ENCODE measurements at regions of chr3 and their contacts with region 1.

Region 1: GRCh38 chr3:14921078-14921616 is 26.2 kb upstream of the NR2C2 start:
- DNase-seq: peak; percentile 89
- ATAC-seq: peak; percentile 95
- H3K4me3 Mint-ChIP-seq: no peak overlapping the region
- H3K27ac Mint-ChIP-seq: no peak overlapping the region
- H3K4me1 Mint-ChIP-seq: no peaks in the 10 kb centered on the region
- H3K27me3 Mint-ChIP-seq: no peaks in the 10 kb centered on the region

Region 2: DNA sequence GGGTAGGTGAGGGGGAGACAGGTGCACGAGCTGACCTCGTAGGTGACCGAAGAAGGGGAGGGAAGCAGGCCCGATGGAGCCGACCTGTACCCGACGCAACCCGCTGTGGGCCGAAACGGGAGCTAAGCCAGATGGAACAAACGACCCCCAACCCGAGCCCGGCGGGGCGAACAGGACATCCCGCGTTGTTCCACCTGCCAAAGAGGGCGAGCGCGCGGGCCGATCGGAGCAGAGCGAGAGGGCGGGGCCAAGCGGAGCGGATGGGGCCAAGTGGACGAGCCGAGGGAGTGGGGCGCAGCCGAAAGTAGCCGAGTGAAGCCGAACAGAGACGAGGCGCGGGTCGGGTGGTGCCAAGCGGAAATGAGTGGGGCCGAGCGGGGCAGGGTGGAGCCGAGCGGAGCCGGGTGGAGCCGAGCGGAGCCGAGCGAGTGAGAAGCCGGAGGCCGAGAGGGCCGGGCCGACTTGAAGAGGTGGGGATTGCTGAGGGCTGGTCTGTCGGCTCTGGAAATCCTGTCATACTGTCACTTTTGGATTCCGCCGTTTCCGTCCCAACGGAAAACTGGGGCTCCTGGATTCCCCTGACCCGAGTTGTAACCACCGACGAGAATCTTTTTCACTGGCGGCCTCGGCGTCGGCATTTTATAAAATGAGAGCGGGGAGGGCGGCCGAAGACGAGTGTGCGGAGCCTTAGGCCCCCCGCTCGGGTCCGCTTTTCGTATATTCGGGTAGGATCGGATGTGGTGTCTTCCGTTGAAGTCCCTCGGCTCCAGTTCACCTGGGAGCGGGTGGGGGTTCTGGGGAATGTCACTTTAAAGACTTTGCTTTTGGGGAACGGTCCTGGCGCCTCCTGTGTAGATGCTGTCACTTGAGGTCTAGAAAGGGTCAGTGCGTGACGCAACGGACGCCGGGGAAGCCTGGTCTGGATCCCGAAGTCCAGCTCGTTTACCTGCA is 1025.7 kb before region 1 on chr3:
- CTCF ChIA-PET with region 1: no interaction called
- POLR2A ChIA-PET with region 1: no interaction called
- intact Hi-C with region 1: loop called in 1 of 2 experiments (anchors 1 kb)
- DNase-seq: peak; percentile 99
- ATAC-seq: peak; percentile 100
- H3K4me3 Mint-ChIP-seq: peak overlapping the region; percentile 83
- H3K27ac Mint-ChIP-seq: peak overlapping the region; percentile 82
- H3K4me1 Mint-ChIP-seq: peaks cover 19% of the 10 kb centered on the region
- H3K27me3 Mint-ChIP-seq: no peaks in the 10 kb centered on the region

Region 3: DNA sequence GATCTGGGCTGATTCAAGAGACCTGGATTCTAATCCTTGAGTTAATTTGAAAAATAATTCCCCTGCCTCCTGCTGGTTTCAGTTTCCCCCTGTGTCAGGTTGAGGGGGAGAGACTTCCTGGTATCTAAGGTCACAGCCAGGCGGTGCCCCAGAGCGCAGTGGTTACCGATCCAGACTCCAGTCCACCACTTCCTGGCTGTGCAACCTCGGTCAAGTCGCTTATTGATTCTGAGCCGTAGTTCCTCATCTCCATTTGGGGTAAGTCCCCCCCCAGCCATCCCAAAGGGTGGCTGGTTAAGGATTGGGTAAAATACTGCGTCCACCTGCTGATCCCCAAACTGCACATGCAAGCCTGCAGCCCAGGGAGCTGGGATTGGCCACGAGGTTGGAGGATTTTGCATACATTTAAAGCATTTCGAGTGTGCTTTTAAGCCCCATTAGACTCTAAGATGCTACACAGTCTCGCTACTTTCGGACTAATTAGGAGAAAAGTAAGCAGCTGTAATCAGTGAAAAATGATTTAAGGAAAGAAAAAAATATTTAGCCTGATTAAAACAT is 495.0 kb before region 1 on chr3:
- CTCF ChIA-PET with region 1: no interaction called
- POLR2A ChIA-PET with region 1: no interaction called
- intact Hi-C with region 1: no loop called
- DNase-seq: peak; percentile 66
- ATAC-seq: peak; percentile 45
- H3K4me3 Mint-ChIP-seq: peak overlapping the region; percentile 0
- H3K27ac Mint-ChIP-seq: peak overlapping the region; percentile 79
- H3K4me1 Mint-ChIP-seq: peaks cover 91% of the 10 kb centered on the region
- H3K27me3 Mint-ChIP-seq: no peaks in the 10 kb centered on the region

Region 4: DNA sequence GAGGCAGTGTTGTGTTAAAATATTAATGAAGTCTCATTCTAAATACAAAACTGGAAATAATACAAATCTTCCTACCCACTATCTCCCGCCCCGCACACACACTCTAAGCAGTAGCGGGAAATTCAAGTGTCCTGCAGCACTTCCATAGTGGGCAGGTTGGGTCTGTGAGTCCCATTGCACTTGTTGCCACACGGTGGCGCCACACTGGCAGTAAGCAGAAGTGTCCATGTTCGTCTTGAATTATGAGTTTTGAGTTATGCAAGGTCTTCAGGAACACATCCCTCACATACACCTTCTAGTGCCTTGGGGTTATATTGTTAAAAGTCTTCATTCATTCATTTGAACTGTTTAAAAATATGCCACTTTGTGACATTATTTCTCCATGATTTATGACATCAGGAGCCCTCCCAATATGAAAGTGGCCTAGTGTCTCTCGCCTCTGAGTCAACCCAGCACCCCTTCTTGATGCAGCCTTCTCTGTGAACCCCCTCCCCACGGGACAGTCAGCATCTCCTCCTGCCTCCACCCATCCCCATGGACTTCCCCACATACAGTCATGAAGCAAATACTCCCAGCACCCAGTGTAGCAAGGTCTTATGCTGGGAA is 287.2 kb before region 1 on chr3:
- CTCF ChIA-PET with region 1: interaction called, 14 read pairs
- POLR2A ChIA-PET with region 1: no interaction called
- intact Hi-C with region 1: loop called (anchors 1 kb)
- DNase-seq: peak; percentile 78
- ATAC-seq: peak; percentile 76
- H3K4me3 Mint-ChIP-seq: no peak overlapping the region
- H3K27ac Mint-ChIP-seq: no peak overlapping the region
- H3K4me1 Mint-ChIP-seq: no peaks in the 10 kb centered on the region
- H3K27me3 Mint-ChIP-seq: peaks cover 23% of the 10 kb centered on the region

Region 5: DNA sequence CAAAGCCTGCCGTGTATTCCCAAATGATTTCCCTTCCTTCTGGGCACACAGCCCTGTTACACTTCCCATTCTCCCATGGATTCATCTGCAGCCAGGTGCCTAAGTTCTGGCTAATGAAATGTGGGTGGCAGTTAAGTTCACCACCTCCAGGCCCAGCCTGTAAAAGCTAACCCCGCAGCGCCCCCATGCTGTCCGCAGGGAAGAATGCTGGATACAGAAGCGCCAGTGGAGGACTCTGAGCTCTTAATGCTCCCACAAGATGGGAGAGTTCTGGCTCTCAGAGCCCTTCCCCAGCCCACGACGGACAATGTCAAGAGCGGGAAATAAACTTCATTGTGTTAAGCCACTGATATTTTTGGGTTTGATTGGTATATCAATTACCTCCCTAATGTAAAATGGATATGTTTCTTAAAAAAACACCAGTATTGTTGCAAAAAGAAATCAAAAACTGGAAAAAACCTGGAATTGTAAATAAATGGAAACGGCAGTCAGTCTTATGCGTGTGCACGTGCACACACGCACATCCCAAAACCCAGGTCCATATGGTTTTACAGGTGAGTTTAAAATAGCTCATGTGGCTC is 140.1 kb before region 1 on chr3:
- CTCF ChIA-PET with region 1: interaction called, 14 read pairs
- POLR2A ChIA-PET with region 1: no interaction called
- intact Hi-C with region 1: no loop called
- DNase-seq: peak; percentile 70
- ATAC-seq: peak; percentile 79
- H3K4me3 Mint-ChIP-seq: no peak overlapping the region
- H3K27ac Mint-ChIP-seq: no peak overlapping the region
- H3K4me1 Mint-ChIP-seq: no peaks in the 10 kb centered on the region
- H3K27me3 Mint-ChIP-seq: peaks cover 1% of the 10 kb centered on the region

Region 6: DNA sequence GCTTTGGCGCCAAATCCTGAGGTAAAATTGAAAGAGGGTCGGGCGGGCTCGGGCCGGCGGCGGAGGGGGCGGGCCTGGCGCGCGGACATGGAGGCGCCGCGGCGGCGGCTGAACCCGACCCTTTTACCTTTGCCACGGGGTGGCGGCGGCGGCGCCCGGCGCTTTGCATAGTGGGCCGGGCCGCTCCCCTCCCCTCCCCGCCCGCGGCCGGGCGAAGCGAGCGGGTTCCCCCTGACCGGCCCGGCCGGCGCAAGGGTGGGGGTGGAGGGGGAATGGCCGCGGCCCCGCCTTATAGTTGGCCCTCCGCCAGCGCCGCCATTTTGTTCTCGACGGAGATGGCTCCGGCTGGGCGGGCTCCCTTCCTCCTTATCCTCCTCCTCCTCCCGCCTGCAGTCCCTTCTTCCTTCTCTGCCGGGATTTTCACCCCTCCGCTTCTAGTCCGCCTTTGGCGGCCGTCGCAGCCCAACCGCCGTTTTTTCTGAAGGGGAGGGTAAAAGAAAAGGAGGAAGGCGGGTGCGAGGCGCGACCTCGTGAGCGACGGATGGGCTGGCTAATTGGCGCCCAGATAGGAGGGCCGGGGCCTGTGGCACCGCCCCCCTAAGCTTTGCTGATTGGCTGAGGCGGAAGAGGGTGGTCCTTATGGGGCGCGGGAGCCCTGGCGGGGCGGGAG is 26.9 kb after region 1 on chr3:
- CTCF ChIA-PET with region 1: interaction called, 11 read pairs
- POLR2A ChIA-PET with region 1: no interaction called
- intact Hi-C with region 1: no loop called
- DNase-seq: peak; percentile 97
- ATAC-seq: peak; percentile 97
- H3K4me3 Mint-ChIP-seq: peak overlapping the region; percentile 91
- H3K27ac Mint-ChIP-seq: peak overlapping the region; percentile 98
- H3K4me1 Mint-ChIP-seq: peaks cover 49% of the 10 kb centered on the region
- H3K27me3 Mint-ChIP-seq: no peaks in the 10 kb centered on the region

Region 7: DNA sequence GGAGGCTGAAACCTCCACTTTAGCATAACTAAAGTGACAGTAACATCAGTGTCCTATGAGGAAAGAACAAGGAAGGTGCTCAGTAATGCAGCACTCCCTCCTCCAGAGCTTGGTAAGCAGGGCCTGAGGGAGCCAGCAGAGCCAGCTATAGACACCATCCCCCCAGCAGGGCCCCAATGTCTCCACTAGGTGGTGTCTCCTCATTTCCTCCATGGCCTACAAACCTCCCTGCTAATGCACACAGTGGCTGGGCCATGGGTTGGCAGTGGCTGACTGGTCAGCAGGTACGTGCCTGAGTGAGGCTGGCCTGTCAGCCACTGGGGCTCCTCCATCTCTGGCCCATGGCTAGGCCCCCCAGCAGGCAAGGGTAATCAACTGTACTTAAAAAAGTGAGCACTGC is 130.4 kb after region 1 on chr3:
- CTCF ChIA-PET with region 1: interaction called, 5 read pairs
- POLR2A ChIA-PET with region 1: no interaction called
- intact Hi-C with region 1: loop called (anchors 5 kb)
- DNase-seq: peak; percentile 67
- ATAC-seq: peak; percentile 81
- H3K4me3 Mint-ChIP-seq: no peak overlapping the region
- H3K27ac Mint-ChIP-seq: peak overlapping the region; percentile 9
- H3K4me1 Mint-ChIP-seq: peaks cover 30% of the 10 kb centered on the region
- H3K27me3 Mint-ChIP-seq: no peaks in the 10 kb centered on the region

Region 8: GRCh38 chr3:15159501-15160136 is 238.5 kb after region 1 on chr3:
- CTCF ChIA-PET with region 1: no interaction called
- POLR2A ChIA-PET with region 1: no interaction called
- intact Hi-C with region 1: no loop called
- DNase-seq: no peak
- ATAC-seq: peak; percentile 70
- H3K4me3 Mint-ChIP-seq: no peak overlapping the region
- H3K27ac Mint-ChIP-seq: no peak overlapping the region
- H3K4me1 Mint-ChIP-seq: peaks cover 5% of the 10 kb centered on the region
- H3K27me3 Mint-ChIP-seq: peaks cover 18% of the 10 kb centered on the region

Measured in activated CD4-positive, alpha-beta T cell treated with anti-CD3 and anti-CD28 coated beads for 36 hours (primary cell).